Vagina (tissue), 2 donors: ENCODE measurements at regions of chr17 and their contacts with region 1.

Region 1: GRCh38 chr17:36629252-36629847 is 28.0 kb downstream of the MRM1 start:
- DNase-seq: no peak
- H3K4me3 ChIP-seq: no peak overlapping the region
- H3K27ac ChIP-seq: no peak overlapping the region
- H3K4me1 ChIP-seq: no peaks in the 10 kb centered on the region
- H3K27me3 ChIP-seq: no peaks in the 10 kb centered on the region
- CTCF ChIP-seq: peak; percentile 91 to 98 (median 97)
- POLR2A ChIP-seq: no peak

Region 2: GRCh38 chr17:36510636-36511035 is 118.7 kb before region 1 on chr17:
- intact Hi-C with region 1: no loop called
- DNase-seq: no peak
- H3K4me3 ChIP-seq: no peak overlapping the region
- H3K27ac ChIP-seq: no peak overlapping the region
- H3K4me1 ChIP-seq: no peaks in the 10 kb centered on the region
- H3K27me3 ChIP-seq: no peaks in the 10 kb centered on the region
- CTCF ChIP-seq: no peak
- POLR2A ChIP-seq: no peak

Region 3: DNA sequence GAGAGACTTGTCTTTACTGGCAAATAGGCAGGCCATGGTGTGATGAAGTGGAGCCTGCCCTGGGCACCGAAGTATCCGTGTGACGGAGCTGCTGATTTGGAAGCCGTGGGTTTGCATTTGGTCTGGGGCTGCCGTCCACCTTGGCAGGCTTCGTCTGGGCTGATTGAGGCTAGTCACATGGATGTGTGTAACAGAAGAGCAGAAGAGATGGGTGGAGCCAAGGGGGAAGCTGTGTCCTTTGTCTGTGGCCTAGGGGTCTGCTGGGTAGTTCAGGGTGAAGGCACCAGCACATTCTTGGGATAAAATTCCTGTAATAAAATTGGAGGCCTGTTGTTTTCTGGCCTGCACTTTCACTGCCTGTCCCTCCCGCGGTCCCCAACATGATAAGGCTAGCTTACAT is 425.5 kb after region 1 on chr17:
- intact Hi-C with region 1: loop called (anchors 5 kb)
- DNase-seq: no peak
- H3K4me3 ChIP-seq: no peak overlapping the region
- H3K27ac ChIP-seq: no peak overlapping the region
- H3K4me1 ChIP-seq: no peaks in the 10 kb centered on the region
- H3K27me3 ChIP-seq: no peaks in the 10 kb centered on the region
- CTCF ChIP-seq: no peak
- POLR2A ChIP-seq: no peak